HCT116 (cell line): ENCODE measurements at regions of chr11 and their contacts with region 1.

Region 1: GRCh38 chr11:61792310-61793085 is at the starts of genes FEN1 and TMEM258:
- DNase-seq: peak; percentile 88
- ATAC-seq: peak; percentile 84
- H3K4me3 ChIP-seq: peak within 1 kb of the TSS; percentile 96 to 100
- H3K27ac ChIP-seq: peak within 1 kb of the TSS; percentile 94
- H3K4me1 ChIP-seq: peaks cover 4 to 16% of the 10 kb centered on the region in 2 experiments; a peak in 2 of 4 replicates
- H3K27me3 ChIP-seq: no peaks in the 10 kb centered on the region
- CTCF ChIP-seq: no peak
- POLR2A ChIP-seq: peak; percentile 73
- RAD21 ChIP-seq: no peak
- total RNA-seq, gene FEN1: 89.5 TPM
- total RNA-seq, gene TMEM258: 160 TPM

Region 2: GRCh38 chr11:61739966-61740365 is 52.5 kb before region 1 on chr11:
- CTCF ChIA-PET with region 1: no interaction called
- POLR2A ChIA-PET with region 1: no interaction called
- RAD21 ChIA-PET with region 1: no interaction called
- intact Hi-C with region 1: no loop called
- DNase-seq: no peak
- ATAC-seq: no peak
- H3K4me3 ChIP-seq: no peak overlapping the region
- H3K27ac ChIP-seq: no peak overlapping the region
- H3K4me1 ChIP-seq: no peaks in the 10 kb centered on the region
- H3K27me3 ChIP-seq: no peaks in the 10 kb centered on the region
- CTCF ChIP-seq: no peak
- POLR2A ChIP-seq: no peak
- RAD21 ChIP-seq: no peak

Region 3: DNA sequence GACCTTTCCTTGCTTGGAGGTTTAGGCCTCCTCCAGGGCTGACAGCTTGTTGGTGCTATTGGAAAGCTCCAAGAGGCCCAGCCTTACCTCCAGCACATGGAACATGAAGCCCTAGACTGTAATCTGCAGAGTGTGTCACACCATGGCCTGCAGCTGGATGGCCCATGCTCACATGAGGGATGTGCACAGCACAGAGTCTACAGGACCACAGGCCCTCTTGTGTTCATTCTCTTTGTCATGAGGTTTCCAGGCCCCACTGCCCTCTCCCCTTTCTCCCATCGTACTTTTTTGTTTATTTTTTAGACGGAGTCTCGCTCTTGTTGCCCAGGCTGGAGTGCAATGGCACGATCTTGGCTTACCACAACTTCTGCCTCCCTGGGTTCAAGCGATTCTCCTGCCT is 14.3 kb after region 1 on chr11:
- CTCF ChIA-PET with region 1: interaction called, 11 read pairs
- POLR2A ChIA-PET with region 1: no interaction called
- RAD21 ChIA-PET with region 1: no interaction called
- intact Hi-C with region 1: no loop called
- DNase-seq: no peak
- ATAC-seq: no peak
- H3K4me3 ChIP-seq: no peak overlapping the region
- H3K27ac ChIP-seq: no peak overlapping the region
- H3K4me1 ChIP-seq: peaks cover 0 to under 1% of the 10 kb centered on the region in 2 experiments; a peak in 1 of 4 replicates
- H3K27me3 ChIP-seq: no peaks in the 10 kb centered on the region
- CTCF ChIP-seq: no peak
- POLR2A ChIP-seq: no peak
- RAD21 ChIP-seq: no peak

Region 4: DNA sequence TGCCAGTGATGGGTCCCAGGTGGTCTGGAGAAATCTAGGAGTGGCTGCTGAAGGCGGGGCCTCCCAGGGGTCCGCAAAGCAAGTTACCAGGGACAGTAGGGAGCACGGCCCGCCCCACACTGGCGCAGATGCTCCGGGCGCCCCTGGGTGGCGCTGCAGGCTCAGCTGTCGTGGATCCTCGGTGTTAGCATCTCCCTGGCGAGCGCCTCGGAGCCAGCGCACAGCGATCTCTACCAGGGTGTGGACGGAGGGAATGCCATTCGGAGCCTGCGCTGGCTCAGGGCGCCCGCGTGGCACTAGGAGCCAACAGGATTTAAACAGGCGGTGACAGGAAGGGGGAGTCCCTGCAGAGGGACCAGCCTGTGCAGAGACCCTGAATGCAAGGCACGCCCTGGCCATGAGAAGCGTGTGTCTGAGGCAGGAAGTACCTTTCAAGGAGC is 78.7 kb after region 1 on chr11:
- CTCF ChIA-PET with region 1: interaction called, 17 read pairs
- POLR2A ChIA-PET with region 1: no interaction called
- RAD21 ChIA-PET with region 1: no interaction called
- intact Hi-C with region 1: no loop called
- DNase-seq: peak; percentile 43
- ATAC-seq: peak; percentile 99
- H3K4me3 ChIP-seq: peak overlapping the region; percentile 6 to 47; a peak in 3 of 4 replicates
- H3K27ac ChIP-seq: no peak overlapping the region
- H3K4me1 ChIP-seq: peaks cover 9 to 20% of the 10 kb centered on the region in 2 experiments
- H3K27me3 ChIP-seq: no peaks in the 10 kb centered on the region
- CTCF ChIP-seq: peak; percentile 86 to 96 (median 94)
- POLR2A ChIP-seq: no peak
- RAD21 ChIP-seq: peak; percentile 99

Region 5: DNA sequence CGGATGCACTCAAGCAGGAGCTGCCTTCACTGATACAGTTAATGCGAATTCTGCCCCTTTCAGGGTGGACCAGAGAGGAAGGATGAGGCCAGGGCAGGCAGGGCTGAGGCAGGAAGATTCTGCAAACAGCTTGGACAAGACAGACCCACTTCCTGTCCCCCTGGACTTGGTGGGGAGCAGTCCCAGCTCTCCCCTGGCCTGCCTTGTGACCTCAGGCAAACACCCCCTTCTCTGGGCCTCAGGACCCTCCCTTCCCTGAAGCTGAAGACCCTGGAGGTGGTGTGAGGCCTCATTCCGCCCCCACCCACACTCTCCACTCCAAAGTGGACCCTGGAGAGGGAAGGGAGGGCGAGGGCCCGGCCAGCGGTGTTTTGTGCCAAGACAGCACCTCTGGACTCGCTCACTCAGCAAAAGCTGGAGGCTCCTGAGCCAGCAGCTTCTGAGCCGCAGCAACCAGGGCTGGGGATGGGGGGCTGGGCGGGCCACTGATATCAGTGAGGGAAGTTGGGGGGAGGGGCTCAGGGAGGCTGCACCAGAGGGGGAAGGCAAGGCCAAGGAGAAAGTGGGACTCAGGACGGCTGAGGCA is 116.3 kb after region 1 on chr11:
- CTCF ChIA-PET with region 1: no interaction called
- POLR2A ChIA-PET with region 1: no interaction called
- RAD21 ChIA-PET with region 1: no interaction called
- intact Hi-C with region 1: no loop called
- DNase-seq: no peak
- ATAC-seq: no peak
- H3K4me3 ChIP-seq: no peak overlapping the region
- H3K27ac ChIP-seq: no peak overlapping the region
- H3K4me1 ChIP-seq: no peaks in the 10 kb centered on the region
- H3K27me3 ChIP-seq: no peaks in the 10 kb centered on the region
- CTCF ChIP-seq: no peak
- POLR2A ChIP-seq: no peak
- RAD21 ChIP-seq: no peak

Region 6: DNA sequence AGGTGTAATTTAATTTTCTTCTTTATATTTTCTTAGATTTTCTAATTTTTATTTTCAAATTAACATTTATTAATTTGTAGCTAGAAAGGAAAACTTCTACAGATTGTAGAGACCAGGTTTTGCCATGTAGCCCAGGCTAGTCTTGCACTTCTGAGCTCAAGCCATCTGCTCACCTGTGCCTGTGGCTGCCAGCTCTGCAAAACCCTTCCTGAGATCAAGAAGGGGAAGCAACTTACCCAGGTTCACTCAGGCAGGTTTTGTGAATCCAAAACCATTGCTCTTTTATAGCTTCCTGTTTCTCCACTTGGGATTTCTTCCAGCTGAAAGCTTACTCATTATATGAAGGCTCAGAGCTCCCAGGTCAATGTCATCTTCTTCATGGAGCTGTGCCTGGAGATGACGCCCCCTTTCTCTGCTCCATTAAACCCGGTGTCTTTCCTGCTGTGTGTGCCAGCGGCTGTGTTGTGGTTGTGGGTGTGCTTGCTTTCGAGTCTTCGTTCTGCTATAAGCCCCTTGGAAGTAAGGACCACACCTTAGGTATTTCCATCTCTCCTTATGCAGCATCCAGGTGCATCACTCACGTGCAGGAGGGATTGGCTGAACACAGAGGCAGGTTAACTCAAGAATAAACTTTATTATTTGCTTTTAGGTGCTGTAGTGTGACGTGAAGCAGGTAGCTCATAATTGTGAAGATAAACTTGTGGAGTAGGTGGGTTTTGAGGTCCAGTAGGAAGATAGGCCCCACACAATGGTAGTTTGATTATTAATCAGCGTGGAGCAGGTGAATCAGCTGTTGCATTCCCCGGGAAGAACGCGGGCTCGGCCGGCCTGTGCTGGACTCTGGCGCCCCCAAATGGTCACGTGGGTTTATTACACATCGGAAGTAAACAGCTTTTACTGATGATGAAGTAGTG is 289.1 kb after region 1 on chr11:
- CTCF ChIA-PET with region 1: interaction called, 51 read pairs
- POLR2A ChIA-PET with region 1: no interaction called
- RAD21 ChIA-PET with region 1: interaction called in 1 of 2 experiments, 7 read pairs
- intact Hi-C with region 1: no loop called
- DNase-seq: peak; percentile 64
- ATAC-seq: peak; percentile 94
- H3K4me3 ChIP-seq: no peak overlapping the region
- H3K27ac ChIP-seq: no peak overlapping the region
- H3K4me1 ChIP-seq: peaks cover 0 to 9% of the 10 kb centered on the region in 2 experiments; a peak in 2 of 4 replicates
- H3K27me3 ChIP-seq: no peaks in the 10 kb centered on the region
- CTCF ChIP-seq: peak; percentile 76 to 95 (median 93)
- POLR2A ChIP-seq: no peak
- RAD21 ChIP-seq: peak; percentile 99

Region 7: DNA sequence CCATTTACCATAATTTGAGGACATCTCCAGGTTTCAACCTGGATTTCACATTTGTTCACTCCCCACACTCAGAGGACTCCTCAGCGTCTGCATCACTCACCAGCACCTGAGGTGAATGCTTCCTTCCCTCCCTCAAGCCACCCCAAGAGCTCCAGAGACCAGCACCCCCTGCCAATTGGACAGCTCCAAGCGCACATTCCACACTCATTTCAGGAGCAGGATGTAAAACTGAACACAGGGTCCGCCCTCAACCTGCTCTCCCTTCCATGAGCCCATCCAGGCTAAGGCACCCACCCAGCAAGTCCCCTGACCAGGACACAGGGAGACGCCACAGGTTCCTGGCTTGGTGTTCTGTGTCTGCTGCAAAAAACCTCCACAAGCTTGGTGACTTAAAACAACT is 401.5 kb after region 1 on chr11:
- CTCF ChIA-PET with region 1: no interaction called
- POLR2A ChIA-PET with region 1: no interaction called
- RAD21 ChIA-PET with region 1: no interaction called
- intact Hi-C with region 1: no loop called
- DNase-seq: no peak
- ATAC-seq: no peak
- H3K4me3 ChIP-seq: no peak overlapping the region
- H3K27ac ChIP-seq: no peak overlapping the region
- H3K4me1 ChIP-seq: no peaks in the 10 kb centered on the region
- H3K27me3 ChIP-seq: peaks cover 55% of the 10 kb centered on the region
- CTCF ChIP-seq: no peak
- POLR2A ChIP-seq: no peak
- RAD21 ChIP-seq: no peak

Region 8: DNA sequence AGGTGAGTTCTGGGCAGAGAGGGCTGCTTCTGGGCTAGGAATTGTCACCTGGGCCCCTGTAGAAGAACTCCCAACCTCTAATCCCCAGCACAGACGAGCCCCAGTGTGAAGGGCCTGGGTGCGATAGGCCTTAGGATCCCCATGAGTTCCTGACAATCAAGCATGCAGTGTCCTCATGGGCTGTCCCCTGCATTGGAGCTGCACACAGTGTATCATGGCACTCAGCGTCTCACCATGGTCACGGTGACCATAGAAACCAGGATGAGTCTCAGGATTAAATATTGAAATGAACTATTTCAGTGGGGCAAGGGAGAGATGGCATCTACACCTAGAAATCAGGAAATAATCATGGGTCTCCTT is 416.3 kb after region 1 on chr11:
- CTCF ChIA-PET with region 1: no interaction called
- POLR2A ChIA-PET with region 1: no interaction called
- RAD21 ChIA-PET with region 1: no interaction called
- intact Hi-C with region 1: loop called (anchors 2 kb)
- DNase-seq: no peak
- ATAC-seq: no peak
- H3K4me3 ChIP-seq: no peak overlapping the region
- H3K27ac ChIP-seq: no peak overlapping the region
- H3K4me1 ChIP-seq: no peaks in the 10 kb centered on the region
- H3K27me3 ChIP-seq: no peaks in the 10 kb centered on the region
- CTCF ChIP-seq: no peak
- POLR2A ChIP-seq: no peak
- RAD21 ChIP-seq: no peak